ENCODE measurements at regions of chr4 and their contacts with region 1.

Region 1: DNA sequence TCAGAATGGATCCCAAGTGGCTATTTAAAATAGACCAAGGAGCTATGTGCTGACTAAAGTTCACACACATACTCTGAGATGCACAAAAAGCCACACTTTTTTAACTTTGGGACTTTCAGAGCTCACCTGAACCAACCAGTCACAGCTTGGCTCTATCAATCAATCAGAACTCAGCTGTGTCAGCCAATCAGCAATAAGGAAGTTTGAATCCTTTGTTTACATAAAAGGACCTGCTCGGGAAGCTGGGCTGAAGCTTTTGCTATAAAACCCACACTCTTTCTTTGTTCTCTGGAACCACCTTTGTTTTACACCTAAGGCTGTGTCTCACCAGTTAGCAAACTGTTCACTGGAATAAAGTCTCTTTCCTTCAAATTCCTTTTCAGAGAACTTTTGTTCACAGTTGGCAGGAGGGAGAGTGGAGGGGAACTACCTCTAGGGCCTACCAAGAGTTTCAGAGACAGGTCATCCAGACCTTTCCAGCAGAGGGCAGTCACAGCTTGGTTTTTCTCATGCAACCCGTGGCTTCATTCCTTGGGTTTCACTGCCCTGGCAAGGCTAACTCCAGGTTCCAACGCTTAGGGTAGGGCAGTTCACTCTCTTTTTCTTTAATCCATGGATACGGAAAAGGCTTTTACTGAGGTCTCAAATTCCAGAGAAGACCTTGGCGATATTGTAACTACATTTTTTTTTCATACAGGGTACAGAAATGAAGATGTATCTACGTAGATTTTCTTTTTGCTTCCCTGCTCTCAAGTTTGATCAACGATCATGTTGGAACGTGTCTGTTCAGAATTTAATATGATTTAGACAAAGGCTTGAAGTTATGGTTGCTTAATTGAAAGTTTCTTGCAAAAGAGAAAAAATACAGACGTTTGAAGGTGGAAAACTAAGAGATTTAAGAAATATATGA is 80.7 kb downstream of the GPRIN3 start:
- DNase-seq: peak; percentile 75 to 92
- H3K4me3 ChIP-seq: no peak overlapping the region
- CTCF ChIP-seq: peak in 1 of 3 donors; percentile 38
- POLR2A ChIP-seq: no peak

Region 2: DNA sequence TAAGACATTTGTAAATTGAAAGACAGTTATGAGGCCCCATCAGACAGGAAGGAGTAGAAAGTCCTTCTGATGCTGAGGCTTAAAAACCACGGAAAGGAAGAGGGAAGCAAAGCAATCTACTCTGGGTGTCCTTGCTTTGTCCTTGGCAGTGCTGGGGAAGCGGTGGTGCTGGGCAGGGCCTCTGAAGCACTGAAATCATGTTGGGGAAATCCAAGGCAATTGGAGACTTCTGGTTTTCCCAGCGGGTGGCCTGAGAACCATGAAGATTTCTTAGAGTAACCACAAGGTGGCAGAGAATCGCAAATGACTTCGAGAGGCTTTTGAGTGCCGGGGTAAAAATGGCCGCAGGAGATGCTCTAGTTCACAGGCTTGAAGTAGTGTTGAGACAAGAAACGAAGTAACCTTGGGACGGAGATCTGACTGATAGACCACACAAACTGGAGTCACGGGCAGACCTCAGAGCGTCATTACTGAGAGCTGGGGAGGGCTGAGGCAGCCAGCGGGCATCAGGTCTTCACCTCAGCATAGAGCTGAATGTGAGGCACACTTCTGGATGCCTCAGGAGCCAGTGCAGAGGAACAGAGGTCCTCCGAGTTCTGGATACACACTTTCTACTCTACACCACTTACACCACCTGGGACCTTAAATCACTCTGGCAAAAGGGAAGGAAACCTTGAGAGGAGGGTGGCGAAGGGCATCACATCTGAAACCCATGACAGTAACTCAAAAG is 211.3 kb after region 1 on chr4:
- intact Hi-C with region 1: loop called (anchors 5 kb)
- DNase-seq: peak in 1 of 2 donors; percentile 14
- H3K4me3 ChIP-seq: no peak overlapping the region
- CTCF ChIP-seq: no peak
- POLR2A ChIP-seq: no peak

Measured in lower leg skin (tissue), 4 donors.